Activated CD4-positive, alpha-beta memory T cell treated with anti-CD3 and anti-CD28 coated beads for 36 hours (primary cell): ENCODE measurements at regions of chr10 and their contacts with region 1.

Region 1: GRCh38 chr10:97210543-97210961 is 24.8 kb upstream of the SLIT1 start:
- DNase-seq: peak; percentile 81
- H3K4me3 Mint-ChIP-seq: no peak overlapping the region
- H3K27ac Mint-ChIP-seq: no peak overlapping the region
- H3K4me1 Mint-ChIP-seq: no peaks in the 10 kb centered on the region
- H3K27me3 Mint-ChIP-seq: no peaks in the 10 kb centered on the region

Region 2: GRCh38 chr10:97081621-97082235 is 128.8 kb before region 1 on chr10:
- CTCF ChIA-PET with region 1: interaction called, 364 read pairs
- POLR2A ChIA-PET with region 1: no interaction called
- intact Hi-C with region 1: loop called (anchors 2 kb)
- DNase-seq: peak; percentile 72
- H3K4me3 Mint-ChIP-seq: no peak overlapping the region
- H3K27ac Mint-ChIP-seq: no peak overlapping the region
- H3K4me1 Mint-ChIP-seq: no peaks in the 10 kb centered on the region
- H3K27me3 Mint-ChIP-seq: peaks cover 21% of the 10 kb centered on the region

Region 3: DNA sequence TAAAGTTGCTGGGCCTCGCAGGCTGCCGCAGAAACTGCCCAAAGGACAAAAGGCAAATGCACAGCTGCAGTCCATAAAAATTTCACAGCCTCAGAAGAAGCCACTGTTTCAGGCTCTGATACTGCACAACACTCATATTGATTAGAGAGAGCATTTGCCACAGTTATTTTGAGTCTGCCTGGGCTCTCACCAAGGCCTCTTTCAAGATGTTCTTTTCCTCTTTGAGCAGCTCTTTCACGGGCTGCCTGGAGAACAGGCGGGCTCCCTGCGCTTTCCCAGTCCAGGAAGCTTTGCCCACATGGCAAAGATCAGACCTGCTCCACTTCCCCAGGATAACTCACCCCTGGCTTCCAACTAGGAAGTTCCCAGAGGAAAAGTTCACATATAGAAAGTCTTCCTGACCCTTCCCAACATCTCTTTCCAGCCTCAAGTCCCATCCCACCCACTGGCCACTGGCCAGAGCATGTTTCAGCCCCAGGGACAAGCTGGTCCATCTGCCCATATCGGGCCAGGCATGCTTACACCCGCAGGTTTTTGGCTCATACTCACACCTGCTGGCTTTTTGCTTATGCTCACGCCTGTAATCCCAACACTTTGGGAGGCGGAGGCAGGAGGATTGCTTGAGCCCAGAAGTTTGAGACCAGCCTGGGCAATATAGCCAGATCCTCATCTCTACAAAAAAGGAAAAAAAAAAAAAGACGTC is 28.1 kb before region 1 on chr10:
- CTCF ChIA-PET with region 1: interaction called, 14 read pairs
- POLR2A ChIA-PET with region 1: no interaction called
- intact Hi-C with region 1: no loop called
- DNase-seq: no peak
- H3K4me3 Mint-ChIP-seq: no peak overlapping the region
- H3K27ac Mint-ChIP-seq: no peak overlapping the region
- H3K4me1 Mint-ChIP-seq: peaks cover 3% of the 10 kb centered on the region
- H3K27me3 Mint-ChIP-seq: peaks cover 53% of the 10 kb centered on the region

Region 4: GRCh38 chr10:97222326-97222961 is 11.9 kb after region 1 on chr10:
- CTCF ChIA-PET with region 1: interaction called, 46 read pairs
- POLR2A ChIA-PET with region 1: no interaction called
- intact Hi-C with region 1: no loop called
- DNase-seq: no peak
- H3K4me3 Mint-ChIP-seq: no peak overlapping the region
- H3K27ac Mint-ChIP-seq: no peak overlapping the region
- H3K4me1 Mint-ChIP-seq: peaks cover 29% of the 10 kb centered on the region
- H3K27me3 Mint-ChIP-seq: no peaks in the 10 kb centered on the region